Heart left ventricle (tissue), 16 donors: ENCODE measurements at regions of chr6 and their contacts with region 1.

Region 1: DNA sequence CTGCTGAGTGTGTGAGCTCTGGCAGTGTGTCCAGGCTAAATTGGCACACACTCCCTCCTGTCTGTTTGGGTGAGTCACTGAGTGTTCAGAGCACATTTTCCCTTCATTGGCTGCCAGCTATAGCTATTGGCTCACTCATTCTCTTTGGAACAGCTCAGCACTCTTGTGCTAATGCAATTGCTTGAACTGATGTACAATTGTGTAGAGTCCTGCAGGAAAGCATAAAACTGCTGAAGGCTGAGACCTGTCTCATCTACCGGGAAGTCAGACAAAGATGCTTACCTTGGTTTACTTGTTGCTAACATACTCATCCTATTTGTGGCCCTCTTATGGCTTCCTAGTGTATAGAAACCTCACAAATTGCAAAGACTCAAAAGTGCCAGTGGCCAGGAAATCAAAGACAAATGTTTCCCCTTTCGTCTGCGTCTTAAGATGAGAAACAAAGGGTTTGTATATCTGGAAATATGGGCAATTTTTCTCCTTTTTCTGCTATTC is 351.0 kb downstream of the BCKDHB start:
- DNase-seq: peak; percentile 48 to 82 (median 73)
- ATAC-seq: peak; percentile 96 to 100 (median 100)
- H3K4me3 ChIP-seq: no peak overlapping the region
- H3K27ac ChIP-seq: no peak overlapping the region
- H3K4me1 ChIP-seq: peaks cover 0 to 23% (median 13%) of the 10 kb centered on the region in 12 donors
- H3K27me3 ChIP-seq: no peaks in the 10 kb centered on the region
- CTCF ChIP-seq: no peak
- POLR2A ChIP-seq: no peak

Region 2: DNA sequence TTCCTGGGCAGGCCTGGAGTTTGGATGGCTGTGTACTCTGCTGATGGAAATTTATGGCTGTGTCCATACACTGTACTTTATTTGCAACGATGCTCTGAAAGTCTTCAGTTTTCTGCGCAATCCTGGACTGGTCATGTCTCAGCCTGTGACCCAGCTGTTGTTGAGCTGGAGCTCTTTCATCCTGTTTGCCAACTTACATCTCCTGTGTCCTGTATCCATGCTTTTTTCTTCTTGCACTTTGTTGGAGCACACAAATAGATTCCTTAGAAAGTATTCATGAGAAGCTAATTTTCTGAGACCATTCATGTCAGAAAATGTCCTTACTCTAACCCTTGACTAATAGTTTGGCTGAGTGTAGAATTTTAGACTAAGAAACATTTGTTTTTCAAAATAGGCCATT is 99.8 kb before region 1 on chr6:
- intact Hi-C with region 1: loop called in 3 of 10 experiments (anchors 10 kb)
- DNase-seq: peak in 1 of 5 donors; percentile 23
- ATAC-seq: peak in 3 of 4 donors; percentile 42 to 78 (median 56)
- H3K4me3 ChIP-seq: no peak overlapping the region
- H3K27ac ChIP-seq: no peak overlapping the region
- H3K4me1 ChIP-seq: peaks cover 0 to 3% (median 0%) of the 10 kb centered on the region in 12 donors
- H3K27me3 ChIP-seq: no peaks in the 10 kb centered on the region
- CTCF ChIP-seq: no peak
- POLR2A ChIP-seq: no peak

Region 3: GRCh38 chr6:80376411-80376810 is 81.1 kb before region 1 on chr6:
- intact Hi-C with region 1: no loop called
- DNase-seq: no peak
- ATAC-seq: no peak
- H3K4me3 ChIP-seq: no peak overlapping the region
- H3K27ac ChIP-seq: no peak overlapping the region
- H3K4me1 ChIP-seq: no peaks in the 10 kb centered on the region
- H3K27me3 ChIP-seq: no peaks in the 10 kb centered on the region
- CTCF ChIP-seq: no peak
- POLR2A ChIP-seq: no peak